ENCODE measurements at regions of chr2 and their contacts with region 1.

Region 1: DNA sequence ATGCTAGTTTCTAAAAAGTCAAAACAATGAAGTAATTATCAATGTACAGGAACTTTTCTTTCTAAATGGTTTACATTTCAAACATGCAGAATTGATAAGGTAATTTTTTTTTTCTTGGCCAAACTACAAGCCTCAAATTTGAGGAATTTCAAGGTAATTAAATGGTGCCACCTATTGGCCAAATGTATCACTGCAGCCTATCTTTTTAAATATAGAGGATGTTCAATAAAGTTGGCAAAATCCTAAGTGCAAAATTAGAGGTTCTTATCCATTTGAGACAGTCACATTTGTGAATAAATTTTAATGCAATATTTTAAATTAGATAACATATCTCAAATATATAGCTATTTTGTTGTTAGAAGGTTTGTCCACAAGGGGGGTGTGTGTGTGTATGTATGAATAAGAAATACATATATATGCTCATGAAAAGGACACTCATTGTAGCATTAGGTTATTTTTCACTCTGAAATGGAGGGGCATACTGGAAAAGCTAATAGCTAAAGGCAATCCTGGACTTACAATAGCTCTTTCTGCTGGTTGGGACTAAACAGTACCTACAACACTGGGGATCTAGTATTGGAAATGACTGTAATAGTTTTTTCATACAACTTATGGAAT is 26.2 kb downstream of the MMADHC start:
- DNase-seq: peak; percentile 17
- H3K4me3 Mint-ChIP-seq: no peak overlapping the region
- H3K27ac Mint-ChIP-seq: no peak overlapping the region
- H3K4me1 Mint-ChIP-seq: no peaks in the 10 kb centered on the region
- H3K27me3 Mint-ChIP-seq: peaks cover 6% of the 10 kb centered on the region

Region 2: GRCh38 chr2:147937744-147938349 is 1623.6 kb before region 1 on chr2:
- CTCF ChIA-PET with region 1: no interaction called
- intact Hi-C with region 1: loop called (anchors 5 kb)
- DNase-seq: no peak
- H3K4me3 Mint-ChIP-seq: no peak overlapping the region
- H3K27ac Mint-ChIP-seq: no peak overlapping the region
- H3K4me1 Mint-ChIP-seq: no peaks in the 10 kb centered on the region
- H3K27me3 Mint-ChIP-seq: no peaks in the 10 kb centered on the region

Region 3: GRCh38 chr2:148926291-148926961 is 635.0 kb before region 1 on chr2:
- CTCF ChIA-PET with region 1: no interaction called
- intact Hi-C with region 1: loop called (anchors 5 kb)
- DNase-seq: peak; percentile 67
- H3K4me3 Mint-ChIP-seq: peak overlapping the region; percentile 76
- H3K27ac Mint-ChIP-seq: peak overlapping the region; percentile 37
- H3K4me1 Mint-ChIP-seq: peaks cover 14% of the 10 kb centered on the region
- H3K27me3 Mint-ChIP-seq: no peaks in the 10 kb centered on the region

Region 4: DNA sequence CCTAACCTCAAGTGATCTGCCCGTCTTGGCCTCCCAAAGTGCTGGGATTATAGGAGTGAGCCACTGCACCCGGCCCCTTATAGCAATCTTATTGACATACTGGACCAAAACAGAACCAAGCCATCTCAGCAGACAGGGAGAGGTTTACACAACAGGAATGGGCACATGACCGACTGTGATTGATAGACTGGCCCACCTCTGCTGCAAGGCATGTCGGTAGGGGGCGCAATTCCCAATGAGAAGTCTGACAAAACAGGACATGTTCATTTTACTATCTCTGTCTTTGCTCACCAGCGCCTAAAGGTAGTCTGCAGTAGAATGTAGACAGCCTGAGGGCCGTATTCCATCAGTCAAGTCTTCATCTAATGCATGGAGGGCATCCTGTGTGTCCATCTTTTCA is 521.0 kb before region 1 on chr2:
- CTCF ChIA-PET with region 1: interaction called, 3 read pairs
- intact Hi-C with region 1: loop called (anchors 1 kb)
- DNase-seq: peak; percentile 73
- H3K4me3 Mint-ChIP-seq: no peak overlapping the region
- H3K27ac Mint-ChIP-seq: no peak overlapping the region
- H3K4me1 Mint-ChIP-seq: no peaks in the 10 kb centered on the region
- H3K27me3 Mint-ChIP-seq: peaks cover 42% of the 10 kb centered on the region

Region 5: GRCh38 chr2:149346272-149346671 is 215.1 kb before region 1 on chr2:
- CTCF ChIA-PET with region 1: no interaction called
- intact Hi-C with region 1: loop called (anchors 10 kb)
- DNase-seq: no peak
- H3K4me3 Mint-ChIP-seq: no peak overlapping the region
- H3K27ac Mint-ChIP-seq: no peak overlapping the region
- H3K4me1 Mint-ChIP-seq: no peaks in the 10 kb centered on the region
- H3K27me3 Mint-ChIP-seq: peaks cover 8% of the 10 kb centered on the region